Mammary epithelial cell (primary cell): ENCODE measurements at regions of chr13 and their contacts with region 1.

Region 1: GRCh38 chr13:105991622-105992277 is 543.7 kb downstream of the EFNB2 start:
- DNase-seq: peak; percentile 100
- H3K4me3 ChIP-seq: no peak overlapping the region
- H3K27ac ChIP-seq: peak overlapping the region; percentile 100
- H3K4me1 ChIP-seq: peaks cover 26% of the 10 kb centered on the region
- H3K27me3 ChIP-seq: no peaks in the 10 kb centered on the region
- CTCF ChIP-seq: peak in 1 of 2 donors; percentile 41

Region 2: DNA sequence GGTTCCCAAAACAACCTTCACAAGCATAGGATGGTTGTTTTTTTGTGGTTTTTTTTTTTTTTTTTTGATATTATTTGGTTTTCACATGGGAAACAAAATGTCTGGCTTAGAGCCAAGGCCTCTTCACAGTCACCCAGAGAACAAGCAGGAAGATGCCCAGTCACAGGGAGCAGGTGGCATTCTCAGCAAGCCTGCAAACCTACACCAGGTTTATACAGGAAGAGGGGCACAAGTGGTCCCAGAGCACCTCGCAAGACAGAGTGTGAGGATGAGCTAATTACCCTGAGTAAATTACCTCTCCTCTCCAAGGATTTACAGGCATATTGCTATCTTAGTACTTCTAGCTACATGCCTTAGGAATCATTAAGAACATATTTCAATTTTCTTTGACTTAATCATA is 831.9 kb before region 1 on chr13:
- CTCF ChIA-PET with region 1: no interaction called
- dilution Hi-C with region 1: no loop called
- in situ Hi-C with region 1: no loop called
- intact Hi-C with region 1: no loop called
- DNase-seq: no peak
- H3K4me3 ChIP-seq: no peak overlapping the region
- H3K27ac ChIP-seq: no peak overlapping the region
- H3K4me1 ChIP-seq: no peaks in the 10 kb centered on the region
- H3K27me3 ChIP-seq: no peaks in the 10 kb centered on the region
- CTCF ChIP-seq: no peak

Region 3: DNA sequence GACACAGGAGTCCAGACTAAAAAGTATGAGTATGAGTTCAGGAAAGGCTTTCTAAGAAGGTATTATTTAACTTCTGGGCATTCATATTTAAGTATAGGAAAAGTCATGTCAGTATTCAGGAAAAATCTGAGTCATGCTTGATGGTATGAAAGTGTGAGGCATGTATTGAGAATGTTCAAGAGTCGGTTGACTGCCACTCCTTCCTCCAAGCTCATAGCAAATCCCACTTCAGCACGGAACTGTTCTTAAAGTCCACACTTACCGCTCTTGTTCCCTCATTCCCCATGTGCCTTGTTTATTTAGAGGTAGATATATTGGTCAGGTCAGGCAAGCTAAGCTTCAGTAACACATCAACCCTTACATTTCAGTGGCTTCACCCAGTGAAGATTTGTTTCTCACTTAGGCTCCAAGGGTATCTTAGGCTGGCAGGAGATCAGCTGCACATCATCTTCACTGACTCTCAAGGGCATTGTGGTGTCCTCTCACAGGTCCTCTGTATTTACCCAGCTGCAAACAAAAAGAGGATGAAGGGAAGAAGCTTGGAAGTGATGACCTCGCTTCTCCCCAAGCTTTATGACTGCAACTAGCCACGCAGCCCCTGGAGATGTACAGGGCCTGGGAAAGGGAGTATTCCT is 645.5 kb before region 1 on chr13:
- CTCF ChIA-PET with region 1: no interaction called
- dilution Hi-C with region 1: no loop called
- in situ Hi-C with region 1: no loop called
- intact Hi-C with region 1: no loop called
- DNase-seq: peak; percentile 69
- H3K4me3 ChIP-seq: no peak overlapping the region
- H3K27ac ChIP-seq: peak overlapping the region; percentile 50
- H3K4me1 ChIP-seq: no peaks in the 10 kb centered on the region
- H3K27me3 ChIP-seq: no peaks in the 10 kb centered on the region
- CTCF ChIP-seq: no peak

Region 4: GRCh38 chr13:105410602-105411001 is 581.1 kb before region 1 on chr13:
- CTCF ChIA-PET with region 1: interaction called, 14 read pairs
- dilution Hi-C with region 1: no loop called
- in situ Hi-C with region 1: no loop called
- intact Hi-C with region 1: loop called (anchors 10 kb)
- DNase-seq: peak; percentile 53
- H3K4me3 ChIP-seq: no peak overlapping the region
- H3K27ac ChIP-seq: no peak overlapping the region
- H3K4me1 ChIP-seq: no peaks in the 10 kb centered on the region
- H3K27me3 ChIP-seq: no peaks in the 10 kb centered on the region
- CTCF ChIP-seq: peak; percentile 91

Region 5: DNA sequence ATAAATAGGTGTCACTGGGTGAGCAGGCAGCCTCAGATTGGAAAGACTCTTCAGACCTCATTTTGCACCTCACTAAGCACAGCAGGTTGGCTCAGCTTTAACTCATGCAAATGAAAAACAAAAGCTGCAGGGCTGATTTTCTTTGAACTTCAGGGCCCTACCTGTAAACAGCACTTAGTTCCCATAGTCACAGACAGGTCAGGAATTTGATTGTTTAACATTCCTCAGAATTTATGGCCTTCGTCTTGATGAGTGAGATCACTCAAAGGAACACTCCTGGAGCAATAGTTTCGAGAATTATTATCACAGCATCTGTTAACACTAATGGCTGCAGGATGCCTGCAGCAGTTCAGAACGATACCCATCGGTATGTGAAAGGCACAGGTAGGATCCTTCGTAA is 174.7 kb before region 1 on chr13:
- CTCF ChIA-PET with region 1: no interaction called
- dilution Hi-C with region 1: no loop called
- in situ Hi-C with region 1: loop called in 1 of 2 experiments (anchors 10 kb)
- intact Hi-C with region 1: loop called (anchors 2 kb)
- DNase-seq: peak; percentile 15
- H3K4me3 ChIP-seq: no peak overlapping the region
- H3K27ac ChIP-seq: no peak overlapping the region
- H3K4me1 ChIP-seq: peaks cover 18% of the 10 kb centered on the region
- H3K27me3 ChIP-seq: no peaks in the 10 kb centered on the region
- CTCF ChIP-seq: no peak

Region 6: DNA sequence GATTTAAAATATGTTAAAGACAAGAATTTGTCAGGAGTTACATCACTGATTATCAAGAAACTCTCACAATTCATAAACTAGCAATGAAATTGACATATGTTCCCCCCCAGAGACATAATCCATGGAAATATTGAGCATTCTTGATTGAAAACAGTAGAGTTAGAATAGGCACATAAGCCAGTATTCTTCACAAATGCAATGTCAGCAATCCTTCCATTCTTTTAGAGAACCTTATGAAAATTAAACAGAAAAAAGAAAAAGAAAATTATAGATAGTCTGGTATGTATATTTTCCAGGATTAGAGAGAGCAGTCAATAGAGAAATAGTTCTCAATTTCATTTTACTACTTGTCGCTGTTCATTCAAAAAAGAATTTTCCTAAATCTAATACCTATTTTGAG is 85.3 kb after region 1 on chr13:
- CTCF ChIA-PET with region 1: interaction called, 4 read pairs
- dilution Hi-C with region 1: loop called (anchors 5 kb)
- in situ Hi-C with region 1: no loop called
- intact Hi-C with region 1: loop called (anchors 1 kb)
- DNase-seq: no peak
- H3K4me3 ChIP-seq: no peak overlapping the region
- H3K27ac ChIP-seq: no peak overlapping the region
- H3K4me1 ChIP-seq: no peaks in the 10 kb centered on the region
- H3K27me3 ChIP-seq: no peaks in the 10 kb centered on the region
- CTCF ChIP-seq: no peak

Region 7: GRCh38 chr13:106156468-106156867 is 164.7 kb after region 1 on chr13:
- CTCF ChIA-PET with region 1: no interaction called
- dilution Hi-C with region 1: no loop called
- in situ Hi-C with region 1: no loop called
- intact Hi-C with region 1: loop called (anchors 2 kb)
- DNase-seq: peak; percentile 99
- H3K4me3 ChIP-seq: no peak overlapping the region
- H3K27ac ChIP-seq: peak overlapping the region; percentile 98
- H3K4me1 ChIP-seq: peaks cover 62% of the 10 kb centered on the region
- H3K27me3 ChIP-seq: no peaks in the 10 kb centered on the region
- CTCF ChIP-seq: no peak

Region 8: GRCh38 chr13:106286811-106287210 is 295.1 kb after region 1 on chr13:
- CTCF ChIA-PET with region 1: no interaction called
- dilution Hi-C with region 1: no loop called
- in situ Hi-C with region 1: no loop called
- intact Hi-C with region 1: no loop called
- DNase-seq: no peak
- H3K4me3 ChIP-seq: no peak overlapping the region
- H3K27ac ChIP-seq: no peak overlapping the region
- H3K4me1 ChIP-seq: peaks cover 26% of the 10 kb centered on the region
- H3K27me3 ChIP-seq: no peaks in the 10 kb centered on the region
- CTCF ChIP-seq: no peak